CD8-positive, alpha-beta T cell (primary cell): ENCODE measurements at regions of chr13 and their contacts with region 1.

Region 1: GRCh38 chr13:48975856-48976575 is at the start of gene FNDC3A:
- DNase-seq: peak; percentile 70 to 93 (median 83)
- ATAC-seq: peak; percentile 70
- H3K4me3 ChIP-seq: peak within 1 kb of the TSS; percentile 79 to 80
- H3K4me3 Mint-ChIP-seq: peak within 1 kb of the TSS; percentile 97
- H3K27ac ChIP-seq: peak within 1 kb of the TSS; percentile 79 to 91
- H3K27ac Mint-ChIP-seq: peak within 1 kb of the TSS; percentile 99
- H3K4me1 ChIP-seq: peaks cover 33% of the 10 kb centered on the region
- H3K4me1 Mint-ChIP-seq: peaks cover 42% of the 10 kb centered on the region
- H3K27me3 ChIP-seq: no peaks in the 10 kb centered on the region
- H3K27me3 Mint-ChIP-seq: no peaks in the 10 kb centered on the region
- CTCF ChIP-seq: no peak
- total RNA-seq, gene FNDC3A: 27.0 to 27.7 TPM

Region 2: GRCh38 chr13:48000778-48001628 is 975.0 kb before region 1 on chr13 and contains the start of gene SUCLA2:
- CTCF ChIA-PET with region 1: no interaction called
- POLR2A ChIA-PET with region 1: no interaction called
- intact Hi-C with region 1: loop called (anchors 10 kb)
- DNase-seq: peak; percentile 77 to 93 (median 88)
- ATAC-seq: peak; percentile 100
- H3K4me3 ChIP-seq: peak within 1 kb of the TSS; percentile 99
- H3K4me3 Mint-ChIP-seq: peak within 1 kb of the TSS; percentile 95
- H3K27ac ChIP-seq: peak within 1 kb of the TSS; percentile 72 to 81
- H3K27ac Mint-ChIP-seq: peak within 1 kb of the TSS; percentile 91
- H3K4me1 ChIP-seq: peaks cover 16% of the 10 kb centered on the region
- H3K4me1 Mint-ChIP-seq: peaks cover 35% of the 10 kb centered on the region
- H3K27me3 ChIP-seq: no peaks in the 10 kb centered on the region
- H3K27me3 Mint-ChIP-seq: no peaks in the 10 kb centered on the region
- CTCF ChIP-seq: no peak
- total RNA-seq, gene SUCLA2: 20.8 to 22.9 TPM

Region 3: GRCh38 chr13:48653472-48653939 is 322.5 kb before region 1 on chr13 and contains the start of gene CYSLTR2:
- CTCF ChIA-PET with region 1: no interaction called
- POLR2A ChIA-PET with region 1: no interaction called
- intact Hi-C with region 1: loop called in 1 of 2 experiments (anchors 5 kb)
- DNase-seq: peak in 3 of 9 experiments; percentile 26 to 91 (median 84)
- ATAC-seq: peak; percentile 88
- H3K4me3 ChIP-seq: peak within 1 kb of the TSS; percentile 42 to 45
- H3K4me3 Mint-ChIP-seq: peak within 1 kb of the TSS; percentile 81
- H3K27ac ChIP-seq: peak within 1 kb of the TSS; percentile 78 to 85
- H3K27ac Mint-ChIP-seq: peak within 1 kb of the TSS; percentile 91
- H3K4me1 ChIP-seq: peaks cover 24% of the 10 kb centered on the region
- H3K4me1 Mint-ChIP-seq: peaks cover 36% of the 10 kb centered on the region
- H3K27me3 ChIP-seq: no peaks in the 10 kb centered on the region
- H3K27me3 Mint-ChIP-seq: no peaks in the 10 kb centered on the region
- CTCF ChIP-seq: no peak
- total RNA-seq, gene CYSLTR2: 1.8 to 2.1 TPM

Region 4: DNA sequence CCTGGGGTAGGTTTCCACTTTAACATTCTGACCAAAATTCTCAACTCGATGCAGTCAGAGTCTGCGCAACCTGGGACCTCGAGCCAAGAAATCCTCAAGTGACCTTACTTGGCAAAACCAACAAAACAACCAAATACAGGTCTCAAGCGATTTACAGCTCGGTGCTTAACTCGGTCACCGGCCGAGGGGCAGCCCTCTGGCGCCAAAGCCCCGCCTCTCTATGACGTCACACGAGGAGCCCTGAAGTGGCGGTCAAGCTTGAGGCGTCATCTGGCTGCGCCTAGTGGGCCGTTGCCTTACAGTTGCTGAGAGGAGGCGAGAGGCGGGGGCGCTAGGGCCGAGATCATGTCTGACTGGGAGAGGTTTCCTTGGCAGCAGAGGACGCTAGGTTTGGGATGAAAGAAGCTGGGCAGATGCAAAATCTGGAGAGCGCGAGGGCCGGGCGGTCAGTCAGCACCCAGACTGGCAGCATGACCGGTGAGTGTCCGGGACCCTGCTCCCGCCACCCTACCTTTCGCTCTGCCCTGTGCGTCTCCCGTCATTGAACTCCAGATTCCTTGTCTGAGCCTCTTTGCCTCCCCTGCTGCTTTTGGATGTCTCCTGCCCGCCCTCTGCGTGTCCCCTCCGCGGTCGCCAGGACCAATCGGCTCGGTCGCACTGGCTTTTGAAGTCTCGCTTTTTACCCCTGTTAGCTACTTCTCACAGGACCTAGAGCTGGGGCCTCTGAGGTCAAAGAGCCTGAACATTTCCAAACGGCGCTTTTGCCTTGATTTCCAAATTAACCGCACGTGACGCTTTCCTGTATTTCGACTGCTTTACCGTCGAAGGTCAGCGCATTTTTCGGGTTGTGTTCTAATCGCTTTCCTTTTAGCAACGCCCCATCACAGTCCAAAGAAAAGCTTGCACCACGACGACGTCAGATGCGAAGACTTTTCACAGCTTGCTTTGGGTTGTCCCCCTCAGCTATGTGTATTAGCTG is 271.9 kb after region 1 on chr13 and contains the start of gene CDADC1:
- CTCF ChIA-PET with region 1: no interaction called
- POLR2A ChIA-PET with region 1: interaction called, 7 read pairs
- intact Hi-C with region 1: loop called in 1 of 2 experiments (anchors 1 kb)
- DNase-seq: peak; percentile 73 to 93 (median 87)
- ATAC-seq: peak; percentile 74
- H3K4me3 ChIP-seq: peak within 1 kb of the TSS; percentile 83 to 99
- H3K4me3 Mint-ChIP-seq: peak within 1 kb of the TSS; percentile 92
- H3K27ac ChIP-seq: peak within 1 kb of the TSS; percentile 80 to 93
- H3K27ac Mint-ChIP-seq: peak within 1 kb of the TSS; percentile 90
- H3K4me1 ChIP-seq: peaks cover 8% of the 10 kb centered on the region
- H3K4me1 Mint-ChIP-seq: peaks cover 54% of the 10 kb centered on the region
- H3K27me3 ChIP-seq: no peaks in the 10 kb centered on the region
- H3K27me3 Mint-ChIP-seq: no peaks in the 10 kb centered on the region
- CTCF ChIP-seq: no peak
- total RNA-seq, gene CDADC1: 15.9 to 17.2 TPM

Region 5: GRCh38 chr13:49495783-49496762 is 520.1 kb after region 1 on chr13 and contains the start of gene PHF11:
- CTCF ChIA-PET with region 1: no interaction called
- POLR2A ChIA-PET with region 1: interaction called, 3 read pairs
- intact Hi-C with region 1: loop called in 1 of 2 experiments (anchors 5 kb)
- DNase-seq: peak; percentile 67 to 94 (median 87)
- ATAC-seq: peak; percentile 80
- H3K4me3 ChIP-seq: peak within 1 kb of the TSS; percentile 68 to 88
- H3K4me3 Mint-ChIP-seq: peak within 1 kb of the TSS; percentile 96
- H3K27ac ChIP-seq: peak within 1 kb of the TSS; percentile 90 to 96
- H3K27ac Mint-ChIP-seq: peak within 1 kb of the TSS; percentile 99
- H3K4me1 ChIP-seq: peaks cover 20% of the 10 kb centered on the region
- H3K4me1 Mint-ChIP-seq: peaks cover 47% of the 10 kb centered on the region
- H3K27me3 ChIP-seq: no peaks in the 10 kb centered on the region
- H3K27me3 Mint-ChIP-seq: no peaks in the 10 kb centered on the region
- CTCF ChIP-seq: no peak
- total RNA-seq, gene PHF11: 93.9 to 98.3 TPM